Sigmoid colon (tissue), 7 donors: ENCODE measurements at regions of chr3 and their contacts with region 1.

Region 1: GRCh38 chr3:69691860-69692259 is 47.4 kb upstream of the MITF start:
- DNase-seq: no peak
- H3K4me3 ChIP-seq: no peak overlapping the region
- H3K27ac ChIP-seq: no peak overlapping the region
- H3K4me1 ChIP-seq: peaks cover 0 to 7% (median 3%) of the 10 kb centered on the region in 4 donors
- H3K27me3 ChIP-seq: no peaks in the 10 kb centered on the region
- CTCF ChIP-seq: no peak
- EP300 ChIP-seq: no peak
- POLR2A ChIP-seq: no peak

Region 2: DNA sequence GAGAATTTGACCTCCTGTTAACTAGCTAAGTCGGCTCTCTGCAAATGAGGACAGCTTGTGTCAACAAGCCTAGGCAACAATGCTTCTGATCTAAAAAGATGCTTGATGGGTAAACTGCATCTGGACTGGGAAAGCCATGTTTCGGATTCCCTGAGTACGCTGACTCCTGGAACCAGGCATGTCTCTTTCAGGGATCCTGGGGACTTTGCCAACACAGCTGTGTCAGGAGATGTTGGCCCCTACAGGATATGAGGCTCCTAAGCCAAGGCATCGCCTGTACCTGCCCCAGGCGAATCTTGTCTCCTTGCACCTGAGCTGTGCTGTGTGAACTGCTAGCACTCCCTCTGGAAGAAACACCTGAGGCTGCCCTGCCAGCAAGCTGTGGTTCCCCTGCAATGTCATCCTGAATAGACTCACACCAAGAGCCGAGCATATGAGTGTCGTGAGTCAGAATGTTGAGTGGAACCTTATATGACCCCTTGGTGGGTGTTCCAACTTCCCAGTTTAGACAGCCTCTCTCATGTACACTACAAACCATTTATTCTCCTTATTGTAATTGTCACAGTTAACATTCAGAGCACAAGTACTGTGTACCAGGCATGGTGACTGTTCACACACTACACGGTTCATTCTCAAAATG is 695.4 kb before region 1 on chr3:
- intact Hi-C with region 1: no loop called
- DNase-seq: no peak
- H3K4me3 ChIP-seq: no peak overlapping the region
- H3K27ac ChIP-seq: no peak overlapping the region
- H3K4me1 ChIP-seq: no peaks in the 10 kb centered on the region
- H3K27me3 ChIP-seq: no peaks in the 10 kb centered on the region
- CTCF ChIP-seq: no peak
- EP300 ChIP-seq: no peak
- POLR2A ChIP-seq: no peak

Region 3: DNA sequence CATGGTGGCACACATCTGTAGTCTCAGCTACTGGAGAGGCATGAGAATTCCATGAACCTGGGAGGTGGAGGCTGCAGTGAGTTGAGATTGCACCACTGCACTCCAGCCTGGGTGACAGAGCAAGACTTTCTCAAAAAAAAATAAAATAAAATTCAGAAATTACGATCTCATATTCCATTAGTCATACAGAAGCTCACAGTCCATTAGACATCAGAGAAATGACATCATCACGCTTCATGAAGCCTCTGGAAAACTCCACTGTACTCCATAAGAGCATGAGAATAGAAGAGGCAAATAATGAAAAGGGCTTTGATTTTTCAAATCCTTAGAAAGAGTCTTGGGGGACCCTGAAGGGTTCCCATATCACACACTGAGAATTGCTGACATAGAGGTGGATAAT is 97.6 kb before region 1 on chr3:
- intact Hi-C with region 1: no loop called
- DNase-seq: no peak
- H3K4me3 ChIP-seq: no peak overlapping the region
- H3K27ac ChIP-seq: no peak overlapping the region
- H3K4me1 ChIP-seq: peaks cover 0 to 5% (median 0%) of the 10 kb centered on the region in 4 donors
- H3K27me3 ChIP-seq: no peaks in the 10 kb centered on the region
- CTCF ChIP-seq: no peak
- EP300 ChIP-seq: no peak
- POLR2A ChIP-seq: no peak

Region 4: GRCh38 chr3:69739204-69740102 is 47.6 kb after region 1 on chr3 and contains the start of gene MITF:
- intact Hi-C with region 1: loop called (anchors 5 kb)
- DNase-seq: peak; percentile 96
- H3K4me3 ChIP-seq: peak within 1 kb of the TSS; percentile 80 to 94 (median 86)
- H3K27ac ChIP-seq: peak within 1 kb of the TSS; percentile 85 to 93 (median 90)
- H3K4me1 ChIP-seq: peaks cover 0 to 51% (median 42%) of the 10 kb centered on the region in 4 donors
- H3K27me3 ChIP-seq: no peaks in the 10 kb centered on the region
- CTCF ChIP-seq: no peak
- EP300 ChIP-seq: no peak
- POLR2A ChIP-seq: peak in 1 of 2 donors; percentile 74
- total RNA-seq, gene MITF: 65.4 to 73.2 (median 67.1) TPM

Region 5: DNA sequence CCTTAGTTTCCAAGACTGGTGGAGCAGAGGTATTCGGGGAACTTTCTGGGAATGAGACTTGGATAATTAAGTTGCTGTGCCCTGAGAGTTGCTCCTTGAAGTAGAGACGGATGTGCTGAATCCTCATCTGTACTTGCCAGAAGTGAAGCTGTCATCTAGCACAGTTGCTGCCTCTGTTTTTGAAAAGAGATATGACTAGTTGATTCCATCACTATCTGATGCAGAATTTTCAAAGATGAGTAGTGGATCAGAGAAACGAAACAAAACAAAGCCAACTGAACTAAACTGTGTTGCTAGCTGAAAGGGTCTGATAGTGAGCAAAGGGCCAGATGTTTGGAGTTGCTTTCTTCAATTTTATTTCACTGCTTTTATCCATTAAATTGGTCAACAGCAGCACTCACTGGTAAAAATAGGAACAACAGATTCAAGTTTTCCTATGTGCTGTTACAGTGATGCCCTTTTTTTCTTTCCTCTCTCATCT is 100.1 kb after region 1 on chr3:
- intact Hi-C with region 1: loop called (anchors 1 kb)
- DNase-seq: no peak
- H3K4me3 ChIP-seq: no peak overlapping the region
- H3K27ac ChIP-seq: peak overlapping the region; percentile 13 to 58 (median 45)
- H3K4me1 ChIP-seq: peaks cover 0 to 46% (median 36%) of the 10 kb centered on the region in 4 donors
- H3K27me3 ChIP-seq: no peaks in the 10 kb centered on the region
- CTCF ChIP-seq: peak; percentile 19 to 63 (median 48)
- EP300 ChIP-seq: no peak
- POLR2A ChIP-seq: no peak

Region 6: GRCh38 chr3:69855436-69856162 is 163.7 kb after region 1 on chr3:
- intact Hi-C with region 1: loop called (anchors 2 kb)
- DNase-seq: no peak
- H3K4me3 ChIP-seq: no peak overlapping the region
- H3K27ac ChIP-seq: peak overlapping the region in 2 of 4 donors; percentile 6 to 35
- H3K4me1 ChIP-seq: peaks cover 0 to 60% (median 32%) of the 10 kb centered on the region in 4 donors
- H3K27me3 ChIP-seq: no peaks in the 10 kb centered on the region
- CTCF ChIP-seq: peak in 1 of 4 experiments; percentile 26
- EP300 ChIP-seq: no peak
- POLR2A ChIP-seq: no peak

Region 7: DNA sequence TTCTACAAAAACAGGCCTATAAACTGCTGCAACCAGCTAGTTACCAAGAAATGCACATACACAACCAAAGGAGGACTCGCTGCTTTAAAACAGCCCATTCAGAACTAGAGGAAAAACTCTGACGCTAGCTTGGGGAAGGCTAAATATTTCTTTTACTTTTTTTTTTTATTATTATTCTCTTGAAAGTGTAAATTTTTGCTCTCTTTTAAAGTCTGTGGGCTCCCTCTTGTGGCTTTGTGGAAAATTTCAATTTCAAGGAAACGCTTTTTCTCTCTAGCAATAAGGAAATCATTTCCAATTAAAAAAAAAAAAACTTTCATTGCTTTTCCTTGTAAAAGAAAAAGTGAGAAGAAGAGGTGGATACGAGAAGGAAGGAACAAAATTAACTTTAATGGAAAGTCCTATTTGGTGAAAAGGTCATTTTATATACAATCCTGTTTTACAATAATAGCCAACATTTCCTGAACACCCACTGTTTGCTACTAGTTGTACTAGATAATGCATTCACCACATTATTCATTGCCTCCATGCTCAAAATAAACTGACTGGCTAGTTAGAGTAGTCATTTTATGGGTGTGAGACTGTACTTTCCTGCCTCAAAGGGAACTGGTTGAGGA is 256.5 kb after region 1 on chr3:
- intact Hi-C with region 1: loop called (anchors 2 kb)
- DNase-seq: no peak
- H3K4me3 ChIP-seq: no peak overlapping the region
- H3K27ac ChIP-seq: peak overlapping the region in 3 of 4 donors; percentile 1 to 22 (median 13)
- H3K4me1 ChIP-seq: peaks cover 0 to 20% (median 11%) of the 10 kb centered on the region in 4 donors
- H3K27me3 ChIP-seq: no peaks in the 10 kb centered on the region
- CTCF ChIP-seq: peak; percentile 13 to 60 (median 22)
- EP300 ChIP-seq: no peak
- POLR2A ChIP-seq: no peak